ENCODE measurements at regions of chr2 and their contacts with region 1.

Region 1: GRCh38 chr2:191677646-191678436 is at the start of gene NABP1:
- DNase-seq: peak; percentile 100
- ATAC-seq: peak; percentile 79
- H3K4me3 Mint-ChIP-seq: peak within 1 kb of the TSS; percentile 97
- H3K27ac Mint-ChIP-seq: peak within 1 kb of the TSS; percentile 99
- H3K4me1 Mint-ChIP-seq: peaks cover 45% of the 10 kb centered on the region
- H3K27me3 Mint-ChIP-seq: no peaks in the 10 kb centered on the region
- total RNA-seq, gene NABP1: 52.4 to 53.9 TPM

Region 2: DNA sequence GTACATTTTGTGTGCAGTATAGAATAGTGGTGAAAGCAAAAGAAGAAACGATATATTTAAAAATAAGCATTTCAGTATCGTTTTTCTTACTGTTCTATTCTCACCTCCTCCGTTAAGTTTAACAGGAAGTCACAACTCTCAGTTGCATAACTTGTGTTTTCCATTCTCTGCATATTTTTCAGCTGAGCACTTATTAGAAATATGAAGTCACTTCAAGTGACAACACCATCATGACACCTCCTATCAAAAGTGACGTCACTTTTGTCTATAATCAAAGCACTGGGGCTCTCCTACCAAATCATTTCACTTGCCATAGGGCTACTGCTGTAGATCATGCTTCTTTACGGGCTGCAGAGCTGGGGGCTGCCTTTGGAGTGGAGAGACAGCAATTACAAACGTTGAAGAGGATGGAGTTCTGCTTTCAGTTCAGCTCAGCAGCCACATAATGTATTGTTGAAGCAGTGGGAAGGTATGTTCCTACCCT is 563.4 kb before region 1 on chr2:
- CTCF ChIA-PET with region 1: no interaction called
- POLR2A ChIA-PET with region 1: interaction called, 3 read pairs
- intact Hi-C with region 1: loop called in 1 of 2 experiments (anchors 2 kb)
- DNase-seq: peak; percentile 49
- ATAC-seq: peak; percentile 22
- H3K4me3 Mint-ChIP-seq: peak overlapping the region; percentile 30
- H3K27ac Mint-ChIP-seq: peak overlapping the region; percentile 82
- H3K4me1 Mint-ChIP-seq: peaks cover 62% of the 10 kb centered on the region
- H3K27me3 Mint-ChIP-seq: no peaks in the 10 kb centered on the region

Region 3: DNA sequence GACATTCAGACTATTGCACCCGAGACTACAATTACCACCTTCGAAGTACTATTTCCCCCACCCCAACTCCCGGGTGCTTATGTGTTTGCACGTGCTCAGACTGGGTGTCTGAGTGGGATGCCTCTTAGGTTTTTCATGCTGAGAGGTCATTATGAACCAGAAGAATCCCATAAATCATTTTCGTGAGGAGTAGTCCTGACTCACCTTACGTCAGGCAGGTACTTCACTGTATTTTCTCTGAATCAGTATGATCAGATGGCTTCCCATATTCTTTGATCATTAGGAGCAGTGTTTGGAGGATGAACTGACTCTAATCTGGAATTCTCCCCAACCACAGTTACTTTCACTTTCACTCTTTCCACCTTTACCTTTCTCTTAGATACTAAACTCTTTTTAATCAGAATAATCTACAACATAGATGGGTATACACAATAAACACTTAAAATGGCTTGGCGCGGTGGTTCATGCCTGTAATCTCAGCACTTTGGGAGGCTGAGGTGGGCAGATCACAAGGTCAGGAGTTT is 488.7 kb before region 1 on chr2:
- CTCF ChIA-PET with region 1: no interaction called
- POLR2A ChIA-PET with region 1: interaction called, 3 read pairs
- intact Hi-C with region 1: loop called (anchors 2 to 10 kb)
- DNase-seq: no peak
- ATAC-seq: no peak
- H3K4me3 Mint-ChIP-seq: peak overlapping the region; percentile 19
- H3K27ac Mint-ChIP-seq: peak overlapping the region; percentile 68
- H3K4me1 Mint-ChIP-seq: peaks cover 63% of the 10 kb centered on the region
- H3K27me3 Mint-ChIP-seq: no peaks in the 10 kb centered on the region

Region 4: GRCh38 chr2:191401287-191401686 is 276.6 kb before region 1 on chr2:
- CTCF ChIA-PET with region 1: no interaction called
- POLR2A ChIA-PET with region 1: no interaction called
- intact Hi-C with region 1: no loop called
- DNase-seq: no peak
- ATAC-seq: no peak
- H3K4me3 Mint-ChIP-seq: no peak overlapping the region
- H3K27ac Mint-ChIP-seq: no peak overlapping the region
- H3K4me1 Mint-ChIP-seq: no peaks in the 10 kb centered on the region
- H3K27me3 Mint-ChIP-seq: no peaks in the 10 kb centered on the region

Region 5: GRCh38 chr2:191617575-191617974 is 60.3 kb before region 1 on chr2:
- CTCF ChIA-PET with region 1: interaction called, 4 read pairs
- POLR2A ChIA-PET with region 1: interaction called, 8 read pairs
- intact Hi-C with region 1: loop called (anchors 1 to 2 kb)
- DNase-seq: peak; percentile 61
- ATAC-seq: peak; percentile 80
- H3K4me3 Mint-ChIP-seq: peak overlapping the region; percentile 47
- H3K27ac Mint-ChIP-seq: peak overlapping the region; percentile 99
- H3K4me1 Mint-ChIP-seq: peaks cover 52% of the 10 kb centered on the region
- H3K27me3 Mint-ChIP-seq: no peaks in the 10 kb centered on the region

Region 6: GRCh38 chr2:191637182-191638078 is 40.4 kb before region 1 on chr2:
- CTCF ChIA-PET with region 1: interaction called, 20 read pairs
- POLR2A ChIA-PET with region 1: interaction called, 27 read pairs
- intact Hi-C with region 1: loop called (anchors 1 kb)
- DNase-seq: no peak
- ATAC-seq: peak; percentile 85
- H3K4me3 Mint-ChIP-seq: peak overlapping the region; percentile 15
- H3K27ac Mint-ChIP-seq: peak overlapping the region; percentile 91
- H3K4me1 Mint-ChIP-seq: peaks cover 59% of the 10 kb centered on the region
- H3K27me3 Mint-ChIP-seq: no peaks in the 10 kb centered on the region

Region 7: GRCh38 chr2:191657977-191658376 is 19.9 kb before region 1 on chr2:
- CTCF ChIA-PET with region 1: interaction called, 10 read pairs
- POLR2A ChIA-PET with region 1: interaction called, 3 read pairs
- intact Hi-C with region 1: loop called in 1 of 2 experiments (anchors 2 kb)
- DNase-seq: no peak
- ATAC-seq: peak; percentile 84
- H3K4me3 Mint-ChIP-seq: no peak overlapping the region
- H3K27ac Mint-ChIP-seq: no peak overlapping the region
- H3K4me1 Mint-ChIP-seq: peaks cover 7% of the 10 kb centered on the region
- H3K27me3 Mint-ChIP-seq: no peaks in the 10 kb centered on the region

Region 8: DNA sequence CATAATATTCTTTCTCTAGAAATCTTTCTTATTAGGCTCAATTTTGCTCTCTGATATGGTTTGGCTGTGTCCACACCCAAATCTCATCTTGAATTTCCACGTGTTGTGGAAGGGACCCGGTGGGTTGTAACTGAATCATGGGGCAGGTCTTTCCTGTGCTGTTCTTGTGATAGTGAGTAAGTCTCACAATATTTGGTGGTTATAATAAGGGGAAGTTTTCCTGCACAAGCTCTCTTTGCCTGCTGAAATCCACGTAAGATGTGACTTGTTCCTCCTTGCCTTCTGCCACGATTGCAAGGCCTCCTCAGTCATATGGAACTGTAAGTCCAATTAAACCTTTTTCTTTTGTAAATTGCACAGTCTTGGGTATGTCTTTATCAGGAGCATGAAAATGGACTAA is 95.3 kb after region 1 on chr2:
- CTCF ChIA-PET with region 1: no interaction called
- POLR2A ChIA-PET with region 1: no interaction called
- intact Hi-C with region 1: no loop called
- DNase-seq: no peak
- ATAC-seq: no peak
- H3K4me3 Mint-ChIP-seq: no peak overlapping the region
- H3K27ac Mint-ChIP-seq: no peak overlapping the region
- H3K4me1 Mint-ChIP-seq: no peaks in the 10 kb centered on the region
- H3K27me3 Mint-ChIP-seq: peaks cover 4% of the 10 kb centered on the region